CD8-positive, alpha-beta T cell (primary cell): ENCODE measurements at regions of chr19 and their contacts with region 1.

Region 1: GRCh38 chr19:15418588-15419412 is at the start of gene AKAP8L:
- DNase-seq: peak; percentile 97 to 100 (median 98)
- ATAC-seq: peak; percentile 89
- H3K4me3 ChIP-seq: peak within 1 kb of the TSS; percentile 86 to 94
- H3K4me3 Mint-ChIP-seq: peak within 1 kb of the TSS; percentile 97
- H3K27ac ChIP-seq: peak within 1 kb of the TSS; percentile 77 to 93
- H3K27ac Mint-ChIP-seq: peak within 1 kb of the TSS; percentile 98
- H3K4me1 ChIP-seq: peaks cover 29% of the 10 kb centered on the region
- H3K4me1 Mint-ChIP-seq: peaks cover 46% of the 10 kb centered on the region
- H3K27me3 ChIP-seq: no peaks in the 10 kb centered on the region
- H3K27me3 Mint-ChIP-seq: no peaks in the 10 kb centered on the region
- CTCF ChIP-seq: peak; percentile 72
- total RNA-seq, gene AKAP8L: 174 to 199 TPM

Region 2: DNA sequence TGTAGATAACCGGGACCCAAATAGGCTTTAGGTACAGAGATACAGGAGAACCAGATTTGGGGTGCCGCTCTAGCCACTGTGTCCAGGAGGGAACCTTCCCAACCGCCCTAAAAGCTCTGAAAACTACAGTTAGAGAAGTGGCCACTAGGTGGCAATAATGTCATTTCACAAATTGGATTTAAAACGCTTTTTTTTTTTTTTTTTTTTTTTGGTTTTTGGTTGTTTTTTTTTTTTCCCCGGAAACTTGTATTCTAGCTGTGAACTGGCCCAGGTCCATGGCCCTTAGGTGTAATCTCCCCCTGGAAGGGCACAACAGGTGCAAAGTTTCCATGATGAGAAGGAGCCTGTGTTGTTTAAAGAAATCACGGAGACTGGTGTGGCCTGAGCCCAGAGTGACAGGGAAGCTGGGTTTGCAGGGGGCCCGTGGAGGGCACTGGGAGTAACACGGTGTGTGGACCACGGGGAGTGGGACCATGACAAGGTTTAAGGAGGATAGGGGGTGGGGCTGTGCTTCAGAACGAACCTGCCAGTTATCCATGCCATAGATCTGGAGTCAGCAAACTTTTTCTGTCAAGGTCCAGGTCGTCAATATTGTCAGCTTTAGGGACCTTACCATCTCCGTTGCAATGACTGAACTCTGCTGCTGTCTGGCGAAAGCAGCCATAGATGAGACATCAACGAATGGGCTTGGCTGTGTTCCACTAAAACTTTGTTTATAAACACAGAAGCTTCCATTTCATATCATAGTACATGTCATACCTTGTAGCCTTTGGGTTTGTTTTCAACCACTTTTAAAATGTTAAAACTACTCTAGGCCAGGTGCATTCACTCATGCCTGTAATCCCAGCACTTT is 326.7 kb before region 1 on chr19:
- CTCF ChIA-PET with region 1: interaction called, 10 read pairs
- POLR2A ChIA-PET with region 1: interaction called, 3 read pairs
- intact Hi-C with region 1: loop called in 1 of 2 experiments (anchors 2 kb)
- DNase-seq: peak in 7 of 9 experiments; percentile 9 to 86 (median 67)
- ATAC-seq: peak; percentile 49
- H3K4me3 ChIP-seq: no peak overlapping the region
- H3K4me3 Mint-ChIP-seq: no peak overlapping the region
- H3K27ac ChIP-seq: no peak overlapping the region
- H3K27ac Mint-ChIP-seq: no peak overlapping the region
- H3K4me1 ChIP-seq: peaks cover 5% of the 10 kb centered on the region
- H3K4me1 Mint-ChIP-seq: peaks cover 4% of the 10 kb centered on the region
- H3K27me3 ChIP-seq: no peaks in the 10 kb centered on the region
- H3K27me3 Mint-ChIP-seq: peaks cover 10% of the 10 kb centered on the region
- CTCF ChIP-seq: peak; percentile 70

Region 3: DNA sequence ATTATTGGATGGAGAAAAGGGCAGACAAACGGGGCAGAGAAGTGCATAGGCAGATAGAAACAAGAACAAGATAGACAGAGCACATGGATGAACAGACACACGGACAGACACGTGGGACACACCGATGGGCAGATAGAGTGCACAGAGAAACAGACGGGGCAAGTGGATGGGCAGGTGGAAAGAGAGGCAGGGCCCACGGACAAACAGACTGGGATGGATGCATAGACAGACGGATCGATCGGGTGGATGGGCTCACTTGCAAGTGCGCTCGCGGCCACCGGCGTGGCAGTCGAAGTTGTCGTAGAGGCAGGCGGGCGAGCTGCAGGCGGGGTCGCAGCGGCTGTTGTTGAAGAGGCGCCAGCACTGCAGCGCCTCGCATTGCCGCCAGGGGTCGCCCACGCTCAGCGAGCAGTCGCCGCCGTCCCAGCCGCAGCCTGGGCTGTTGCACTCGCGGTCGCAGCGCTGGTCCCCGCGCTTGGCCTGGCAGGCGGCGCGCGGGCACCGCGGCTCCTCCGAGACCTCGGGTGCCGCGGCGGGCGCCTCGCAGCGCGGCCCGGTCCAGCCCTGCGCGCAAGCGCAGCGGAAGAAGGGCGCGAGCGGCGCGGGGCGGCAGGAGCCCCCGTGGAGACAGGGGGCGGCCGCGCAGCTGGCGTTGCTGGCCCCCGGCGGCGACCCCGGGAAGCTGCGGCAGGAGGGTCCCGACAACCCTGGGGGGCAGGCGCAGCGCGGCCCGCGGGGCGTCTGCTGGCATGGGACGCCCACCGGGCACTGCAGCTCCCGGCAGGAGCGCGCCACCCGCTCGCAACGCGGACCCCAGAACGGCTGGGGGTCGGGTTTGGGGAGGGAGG is 241.3 kb before region 1 on chr19:
- CTCF ChIA-PET with region 1: interaction called, 24 read pairs
- POLR2A ChIA-PET with region 1: interaction called, 3 read pairs
- intact Hi-C with region 1: loop called (anchors 1 to 2 kb)
- DNase-seq: peak; percentile 74 to 91 (median 82)
- ATAC-seq: peak; percentile 98
- H3K4me3 ChIP-seq: no peak overlapping the region
- H3K4me3 Mint-ChIP-seq: peak overlapping the region; percentile 36
- H3K27ac ChIP-seq: no peak overlapping the region
- H3K27ac Mint-ChIP-seq: no peak overlapping the region
- H3K4me1 ChIP-seq: peaks cover 4% of the 10 kb centered on the region
- H3K4me1 Mint-ChIP-seq: peaks cover 4% of the 10 kb centered on the region
- H3K27me3 ChIP-seq: peaks cover 0 to 8% of the 10 kb centered on the region in 2 experiments
- H3K27me3 Mint-ChIP-seq: peaks cover 15% of the 10 kb centered on the region
- CTCF ChIP-seq: peak; percentile 91

Region 4: DNA sequence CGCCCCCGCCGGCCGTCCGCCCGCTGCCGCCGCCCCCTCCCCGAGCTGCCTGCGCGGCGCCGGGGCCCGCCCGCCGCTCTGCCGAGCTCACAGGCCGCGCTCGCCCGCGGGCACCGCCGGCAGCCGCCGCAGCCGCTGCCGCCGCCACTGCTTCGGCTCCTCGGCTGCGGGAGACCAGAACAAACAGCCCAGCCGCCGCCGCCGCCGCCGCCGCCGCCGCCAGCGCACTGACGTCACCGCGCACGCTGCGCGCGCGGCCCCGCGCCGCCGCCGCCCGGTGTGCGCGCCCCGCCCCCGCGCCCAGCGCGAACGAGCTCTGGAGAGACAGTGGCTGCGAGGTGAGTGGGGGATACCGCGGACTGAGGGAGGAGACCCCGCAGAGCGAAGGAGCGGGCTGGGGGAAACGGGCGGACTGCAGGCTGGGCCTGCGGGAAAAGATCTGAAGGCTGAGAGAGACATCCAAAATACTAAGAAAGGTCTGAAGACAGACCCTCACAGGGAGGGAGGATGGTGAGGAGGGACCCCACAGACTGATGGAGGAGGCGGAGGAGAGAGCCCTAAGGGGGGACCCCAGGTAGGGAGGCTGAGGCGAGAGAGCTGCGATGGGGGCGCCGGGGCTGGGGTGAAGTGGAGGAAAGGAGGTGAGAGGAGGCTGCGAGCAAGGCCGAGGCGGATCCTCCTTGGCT is 86.3 kb before region 1 on chr19 and contains the start of gene BRD4:
- CTCF ChIA-PET with region 1: interaction called, 3 read pairs
- POLR2A ChIA-PET with region 1: interaction called, 4 read pairs
- intact Hi-C with region 1: loop called in 1 of 2 experiments (anchors 2 kb)
- DNase-seq: peak; percentile 58 to 88 (median 77)
- ATAC-seq: peak; percentile 63
- H3K4me3 ChIP-seq: peak within 1 kb of the TSS; percentile 81 to 97
- H3K4me3 Mint-ChIP-seq: peak within 1 kb of the TSS; percentile 95
- H3K27ac ChIP-seq: peak within 1 kb of the TSS; percentile 71 to 83
- H3K27ac Mint-ChIP-seq: peak within 1 kb of the TSS; percentile 96
- H3K4me1 ChIP-seq: peaks cover 42% of the 10 kb centered on the region
- H3K4me1 Mint-ChIP-seq: peaks cover 42% of the 10 kb centered on the region
- H3K27me3 ChIP-seq: no peaks in the 10 kb centered on the region
- H3K27me3 Mint-ChIP-seq: no peaks in the 10 kb centered on the region
- CTCF ChIP-seq: no peak
- total RNA-seq, gene BRD4: 123 to 128 TPM

Region 5: GRCh38 chr19:15404097-15404779 is 14.6 kb before region 1 on chr19:
- CTCF ChIA-PET with region 1: interaction called, 6 read pairs
- POLR2A ChIA-PET with region 1: interaction called, 12 read pairs
- intact Hi-C with region 1: no loop called
- DNase-seq: no peak
- ATAC-seq: no peak
- H3K4me3 ChIP-seq: no peak overlapping the region
- H3K4me3 Mint-ChIP-seq: no peak overlapping the region
- H3K27ac ChIP-seq: no peak overlapping the region
- H3K27ac Mint-ChIP-seq: peak overlapping the region; percentile 21
- H3K4me1 ChIP-seq: no peaks in the 10 kb centered on the region
- H3K4me1 Mint-ChIP-seq: peaks cover 47% of the 10 kb centered on the region
- H3K27me3 ChIP-seq: no peaks in the 10 kb centered on the region
- H3K27me3 Mint-ChIP-seq: no peaks in the 10 kb centered on the region
- CTCF ChIP-seq: no peak

Region 6: GRCh38 chr19:15449620-15450527 is 31.1 kb after region 1 on chr19 and contains the start of gene WIZ:
- CTCF ChIA-PET with region 1: interaction called, 8 read pairs
- POLR2A ChIA-PET with region 1: interaction called, 24 read pairs
- intact Hi-C with region 1: loop called (anchors 1 kb)
- DNase-seq: peak; percentile 75 to 91 (median 86)
- ATAC-seq: peak; percentile 88
- H3K4me3 ChIP-seq: peak within 1 kb of the TSS; percentile 37 to 65
- H3K4me3 Mint-ChIP-seq: peak within 1 kb of the TSS; percentile 84
- H3K27ac ChIP-seq: peak within 1 kb of the TSS; percentile 40 to 83
- H3K27ac Mint-ChIP-seq: peak within 1 kb of the TSS; percentile 93
- H3K4me1 ChIP-seq: peaks cover 21% of the 10 kb centered on the region
- H3K4me1 Mint-ChIP-seq: peaks cover 33% of the 10 kb centered on the region
- H3K27me3 ChIP-seq: no peaks in the 10 kb centered on the region
- H3K27me3 Mint-ChIP-seq: no peaks in the 10 kb centered on the region
- CTCF ChIP-seq: no peak
- total RNA-seq, gene WIZ: 16.4 to 20.1 TPM

Region 7: DNA sequence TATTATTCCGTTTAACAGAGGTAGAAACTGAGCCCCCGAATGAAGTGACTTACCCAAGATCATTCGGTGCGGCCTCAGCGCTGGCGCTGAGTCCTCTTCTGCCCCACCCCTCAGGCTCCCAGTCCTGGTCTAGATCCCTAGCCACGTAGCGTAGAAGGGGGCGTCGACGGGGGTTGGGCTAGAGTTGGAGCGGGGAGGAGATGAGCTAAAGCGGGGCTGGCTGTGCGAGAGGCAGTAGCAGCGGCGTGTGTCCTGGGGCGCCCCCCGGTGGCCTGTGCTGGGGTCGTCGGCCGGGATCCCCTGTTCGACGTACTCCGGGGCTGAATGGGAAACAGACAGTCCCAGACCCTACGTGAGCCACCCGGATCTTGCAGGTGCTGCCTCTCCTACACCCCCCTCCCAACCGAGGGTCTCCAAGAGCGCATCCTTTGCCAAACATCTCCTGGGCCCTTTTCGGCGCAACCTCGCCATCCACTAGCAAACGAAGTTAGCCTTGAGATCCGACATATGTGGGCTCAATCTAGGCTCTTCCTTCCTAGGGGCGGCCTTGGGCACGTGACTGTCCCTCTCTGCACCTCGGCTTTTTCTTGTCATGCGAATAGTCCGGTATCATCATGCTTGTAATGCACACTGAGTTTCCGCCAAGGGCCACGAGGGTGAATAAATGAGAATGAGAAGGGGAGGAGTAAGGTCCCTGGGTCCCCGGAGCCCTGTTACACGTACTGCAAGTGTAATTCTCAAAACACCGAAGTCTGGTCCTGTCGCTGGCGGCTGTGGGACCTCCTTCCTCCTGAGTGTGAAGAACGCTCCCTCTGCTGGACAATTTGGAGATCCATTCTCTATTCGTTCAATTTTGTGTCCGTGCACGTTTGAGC is 137.2 kb after region 1 on chr19:
- CTCF ChIA-PET with region 1: interaction called, 171 read pairs
- POLR2A ChIA-PET with region 1: interaction called, 60 read pairs
- intact Hi-C with region 1: loop called (anchors 1 kb)
- DNase-seq: peak; percentile 92 to 99 (median 96)
- ATAC-seq: peak; percentile 82
- H3K4me3 ChIP-seq: peak overlapping the region; percentile 41 to 52
- H3K4me3 Mint-ChIP-seq: peak overlapping the region; percentile 83
- H3K27ac ChIP-seq: peak overlapping the region; percentile 64 to 80
- H3K27ac Mint-ChIP-seq: peak overlapping the region; percentile 93
- H3K4me1 ChIP-seq: peaks cover 23% of the 10 kb centered on the region
- H3K4me1 Mint-ChIP-seq: peaks cover 18% of the 10 kb centered on the region
- H3K27me3 ChIP-seq: peaks cover 0 to 4% of the 10 kb centered on the region in 2 experiments
- H3K27me3 Mint-ChIP-seq: no peaks in the 10 kb centered on the region
- CTCF ChIP-seq: peak; percentile 69

Region 8: GRCh38 chr19:16018801-16019551 is 600.2 kb after region 1 on chr19:
- CTCF ChIA-PET with region 1: no interaction called
- POLR2A ChIA-PET with region 1: no interaction called
- intact Hi-C with region 1: no loop called
- DNase-seq: no peak
- ATAC-seq: no peak
- H3K4me3 ChIP-seq: no peak overlapping the region
- H3K4me3 Mint-ChIP-seq: no peak overlapping the region
- H3K27ac ChIP-seq: no peak overlapping the region
- H3K27ac Mint-ChIP-seq: no peak overlapping the region
- H3K4me1 ChIP-seq: no peaks in the 10 kb centered on the region
- H3K4me1 Mint-ChIP-seq: no peaks in the 10 kb centered on the region
- H3K27me3 ChIP-seq: no peaks in the 10 kb centered on the region
- H3K27me3 Mint-ChIP-seq: no peaks in the 10 kb centered on the region
- CTCF ChIP-seq: no peak

Region 9: DNA sequence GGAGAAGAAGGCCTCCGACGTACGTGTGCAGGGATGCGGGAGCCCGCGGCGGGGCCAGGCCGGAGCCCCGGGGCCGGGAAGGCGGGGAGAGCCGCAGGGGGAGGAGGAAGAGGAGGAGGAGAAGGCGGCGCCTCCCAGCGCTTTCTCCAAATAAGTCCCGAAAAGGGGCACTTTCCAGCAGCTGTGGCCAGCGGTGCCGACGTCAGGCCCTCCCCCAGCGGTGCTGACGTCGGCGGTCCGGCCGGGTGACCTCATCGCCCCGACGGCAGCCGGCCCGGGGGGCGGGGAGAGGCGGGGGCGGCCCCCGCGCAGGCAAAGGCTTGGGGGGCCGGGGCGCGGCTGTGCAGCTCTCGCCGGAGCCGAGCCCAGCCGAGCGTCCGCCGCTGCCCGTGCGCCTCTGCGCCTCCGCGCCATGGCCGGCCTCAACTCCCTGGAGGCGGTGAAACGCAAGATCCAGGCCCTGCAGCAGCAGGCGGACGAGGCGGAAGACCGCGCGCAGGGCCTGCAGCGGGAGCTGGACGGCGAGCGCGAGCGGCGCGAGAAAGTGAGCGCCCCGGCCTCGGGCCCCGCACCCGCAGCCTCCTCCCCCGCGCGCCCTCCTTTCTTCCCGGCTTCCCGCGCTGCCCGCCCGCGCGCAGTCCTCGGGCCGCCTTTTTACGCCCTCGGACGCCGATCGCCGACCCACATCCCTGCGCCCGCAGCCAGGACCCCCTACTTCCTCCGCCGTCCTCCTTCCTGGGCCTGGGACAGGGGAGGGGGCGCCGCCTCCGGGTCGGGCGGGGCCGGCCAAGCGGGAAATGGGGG is 657.6 kb after region 1 on chr19 and contains the start of gene TPM4:
- CTCF ChIA-PET with region 1: no interaction called
- POLR2A ChIA-PET with region 1: no interaction called
- intact Hi-C with region 1: no loop called
- DNase-seq: peak; percentile 57 to 94 (median 81)
- ATAC-seq: peak; percentile 48
- H3K4me3 ChIP-seq: peak within 1 kb of the TSS; percentile 59 to 79
- H3K4me3 Mint-ChIP-seq: peak within 1 kb of the TSS; percentile 79
- H3K27ac ChIP-seq: peak within 1 kb of the TSS; percentile 64 to 92
- H3K27ac Mint-ChIP-seq: peak within 1 kb of the TSS; percentile 96
- H3K4me1 ChIP-seq: peaks cover 81% of the 10 kb centered on the region
- H3K4me1 Mint-ChIP-seq: peaks cover 74% of the 10 kb centered on the region
- H3K27me3 ChIP-seq: no peaks in the 10 kb centered on the region
- H3K27me3 Mint-ChIP-seq: no peaks in the 10 kb centered on the region
- CTCF ChIP-seq: no peak
- total RNA-seq, gene TPM4: 187 to 199 TPM